Panc1 (cell line): ENCODE measurements at regions of chr12 and their contacts with region 1.

Region 1: GRCh38 chr12:16359512-16360491 is 12.4 kb downstream of the MGST1 start:
- DNase-seq: no peak
- ATAC-seq: no peak
- H3K4me3 ChIP-seq: no peak overlapping the region
- H3K27ac ChIP-seq: no peak overlapping the region
- H3K4me1 ChIP-seq: no peaks in the 10 kb centered on the region
- H3K27me3 ChIP-seq: no peaks in the 10 kb centered on the region
- CTCF ChIP-seq: peak; percentile 82

Region 2: GRCh38 chr12:16165506-16165905 is 194.3 kb before region 1 on chr12:
- CTCF ChIA-PET with region 1: interaction called, 4 read pairs
- POLR2A ChIA-PET with region 1: no interaction called
- in situ Hi-C with region 1: no loop called
- intact Hi-C with region 1: loop called (anchors 5 kb)
- DNase-seq: no peak
- ATAC-seq: no peak
- H3K4me3 ChIP-seq: no peak overlapping the region
- H3K27ac ChIP-seq: no peak overlapping the region
- H3K4me1 ChIP-seq: no peaks in the 10 kb centered on the region
- H3K27me3 ChIP-seq: no peaks in the 10 kb centered on the region
- CTCF ChIP-seq: peak; percentile 45

Region 3: DNA sequence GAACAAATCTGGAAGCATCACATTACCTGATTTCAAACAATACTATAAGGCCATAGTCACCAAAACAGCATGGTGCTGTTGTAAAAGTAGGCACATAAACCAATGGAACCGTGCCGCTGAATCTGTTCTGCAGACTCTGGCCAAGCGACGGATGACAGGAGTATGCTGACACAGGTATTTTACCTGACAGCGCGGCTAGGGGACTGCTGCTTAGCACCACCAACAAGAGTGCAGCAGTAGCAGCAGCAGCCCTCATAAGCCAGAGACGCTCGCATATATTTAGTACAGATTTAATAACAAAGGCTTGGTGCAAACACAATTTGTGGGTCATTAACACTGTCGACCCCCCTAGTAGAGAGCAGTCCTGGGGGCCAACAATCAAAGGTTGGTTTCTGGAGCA is 923.8 kb after region 1 on chr12:
- CTCF ChIA-PET with region 1: no interaction called
- POLR2A ChIA-PET with region 1: no interaction called
- in situ Hi-C with region 1: no loop called
- intact Hi-C with region 1: no loop called
- DNase-seq: no peak
- ATAC-seq: no peak
- H3K4me3 ChIP-seq: no peak overlapping the region
- H3K27ac ChIP-seq: no peak overlapping the region
- H3K4me1 ChIP-seq: no peaks in the 10 kb centered on the region
- H3K27me3 ChIP-seq: no peaks in the 10 kb centered on the region
- CTCF ChIP-seq: no peak